Astrocyte of the cerebellum (primary cell): ENCODE measurements at regions of chr7 and their contacts with region 1.

Region 1: DNA sequence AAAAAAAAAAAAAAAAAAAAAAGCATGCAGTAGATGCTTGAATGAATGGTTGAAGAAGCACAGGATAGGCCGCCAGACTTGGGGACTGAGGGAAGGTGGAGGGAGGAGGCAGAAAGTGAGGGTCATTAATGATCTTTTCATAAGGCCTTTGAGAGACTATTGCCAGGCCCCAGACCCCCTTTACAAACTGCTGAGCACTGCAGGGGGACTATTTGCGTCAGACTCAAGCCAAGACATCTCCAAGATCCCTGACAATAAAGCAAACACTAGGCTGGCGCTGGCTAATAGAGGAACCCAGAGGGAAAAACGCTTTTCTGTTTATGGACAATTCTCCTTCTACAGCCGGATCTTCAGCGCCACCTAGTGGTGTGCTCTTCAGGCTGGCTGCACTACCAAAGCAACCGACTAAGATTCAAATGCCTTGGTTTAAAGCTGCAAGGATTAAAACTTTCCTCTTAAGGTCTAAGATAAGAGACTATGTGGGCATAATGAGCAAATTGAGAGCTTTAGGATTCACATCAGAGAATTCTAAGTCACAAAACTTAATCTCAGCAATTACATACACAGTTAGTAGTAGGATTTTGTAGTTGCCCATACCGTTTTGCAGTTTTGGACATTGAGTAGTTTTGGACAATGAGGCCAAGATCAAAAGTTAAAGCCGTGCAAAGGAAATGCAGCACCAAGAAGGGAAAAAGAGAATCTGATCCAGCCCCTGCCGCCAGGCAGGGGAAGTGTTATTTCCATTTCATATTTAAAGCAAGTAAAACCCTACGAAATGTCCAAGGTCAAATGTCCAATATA is 17.9 kb upstream of the AGK start:
- DNase-seq: peak; percentile 81
- H3K4me3 ChIP-seq: no peak overlapping the region
- CTCF ChIP-seq: peak; percentile 99

Region 2: GRCh38 chr7:140810830-140811556 is 722.4 kb before region 1 on chr7:
- in situ Hi-C with region 1: loop called (anchors 10 kb)
- DNase-seq: peak; percentile 43
- H3K4me3 ChIP-seq: no peak overlapping the region
- CTCF ChIP-seq: peak; percentile 69

Region 3: GRCh38 chr7:140945940-140946339 is 587.4 kb before region 1 on chr7:
- in situ Hi-C with region 1: no loop called
- DNase-seq: no peak
- H3K4me3 ChIP-seq: no peak overlapping the region
- CTCF ChIP-seq: no peak

Region 4: DNA sequence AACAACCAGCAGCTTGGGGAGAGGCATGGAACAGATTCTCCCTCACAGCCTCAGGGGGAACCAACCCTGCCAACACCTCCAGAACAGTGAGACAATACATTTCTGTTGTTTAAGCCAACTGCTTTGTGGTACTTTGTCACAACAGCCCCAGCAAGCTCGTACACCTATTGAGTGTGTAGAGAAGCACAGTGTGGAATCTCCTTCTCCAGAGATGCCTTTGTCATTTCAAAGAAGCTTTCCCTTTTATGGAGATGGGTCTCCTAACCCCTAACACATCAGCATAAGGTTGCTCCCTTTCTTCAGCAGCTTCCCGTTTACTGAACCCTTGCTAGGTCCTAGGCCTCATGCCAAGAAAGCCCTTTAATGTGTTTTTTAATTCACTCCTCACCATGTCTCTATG is 42.9 kb before region 1 on chr7:
- in situ Hi-C with region 1: no loop called
- DNase-seq: no peak
- H3K4me3 ChIP-seq: no peak overlapping the region
- CTCF ChIP-seq: no peak